Caco-2 (cell line): ENCODE measurements at regions of chr10 and their contacts with region 1.

Region 1: GRCh38 chr10:103612462-103613365 is 119.2 kb downstream of the NEURL1 start:
- DNase-seq: no peak
- H3K4me3 ChIP-seq: no peak overlapping the region
- H3K4me3 Mint-ChIP-seq: no peak overlapping the region
- H3K27ac Mint-ChIP-seq: no peak overlapping the region
- H3K4me1 ChIP-seq: no peaks in the 10 kb centered on the region
- H3K4me1 Mint-ChIP-seq: no peaks in the 10 kb centered on the region
- H3K27me3 ChIP-seq: no peaks in the 10 kb centered on the region
- H3K27me3 Mint-ChIP-seq: no peaks in the 10 kb centered on the region
- CTCF ChIP-seq: no peak

Region 2: DNA sequence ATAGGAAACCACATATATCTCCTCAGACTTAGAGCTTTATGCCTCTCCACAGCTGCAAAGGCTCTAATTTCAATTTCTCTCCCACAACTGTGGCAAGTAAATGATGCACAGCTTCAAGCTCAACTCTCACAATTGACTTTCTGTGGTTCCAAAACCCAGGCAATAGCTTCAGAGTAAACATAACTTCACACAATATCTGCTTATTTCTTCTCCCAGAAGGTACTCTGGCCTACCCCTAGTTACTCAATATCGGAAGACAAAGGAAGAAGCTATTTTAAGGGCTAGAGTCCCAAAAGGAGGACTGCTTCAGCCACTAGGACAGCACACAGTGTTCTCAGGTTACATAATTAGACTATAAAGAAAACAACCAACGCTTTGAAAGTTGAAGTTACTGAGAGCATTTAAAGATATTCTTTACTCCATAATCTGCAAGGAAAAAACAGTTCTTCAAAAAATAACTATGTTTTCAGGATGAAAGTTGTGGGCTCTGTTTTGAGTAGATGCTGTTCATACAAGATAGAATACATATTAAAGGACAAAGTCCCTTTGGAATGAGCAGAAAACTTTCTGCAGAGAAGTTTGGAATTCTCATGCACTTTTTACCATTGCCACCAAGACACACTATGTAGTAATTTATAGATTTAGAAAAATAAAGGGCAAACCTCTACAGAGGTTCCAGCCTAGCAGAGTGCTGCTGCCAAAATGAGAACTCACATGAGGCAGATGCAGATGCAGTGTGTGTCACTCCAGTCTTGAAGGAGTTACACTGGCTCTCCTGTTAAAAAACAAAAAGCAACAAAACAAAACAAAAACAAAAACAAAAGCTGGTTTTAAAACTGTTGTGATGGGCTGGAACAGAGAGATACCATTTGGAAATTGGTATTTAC is 501.4 kb before region 1 on chr10:
- CTCF ChIA-PET with region 1: no interaction called
- POLR2A ChIA-PET with region 1: no interaction called
- intact Hi-C with region 1: no loop called
- DNase-seq: no peak
- H3K4me3 ChIP-seq: no peak overlapping the region
- H3K4me3 Mint-ChIP-seq: no peak overlapping the region
- H3K27ac Mint-ChIP-seq: no peak overlapping the region
- H3K4me1 ChIP-seq: peaks cover 31% of the 10 kb centered on the region
- H3K4me1 Mint-ChIP-seq: peaks cover 15% of the 10 kb centered on the region
- H3K27me3 ChIP-seq: no peaks in the 10 kb centered on the region
- H3K27me3 Mint-ChIP-seq: no peaks in the 10 kb centered on the region
- CTCF ChIP-seq: no peak

Region 3: DNA sequence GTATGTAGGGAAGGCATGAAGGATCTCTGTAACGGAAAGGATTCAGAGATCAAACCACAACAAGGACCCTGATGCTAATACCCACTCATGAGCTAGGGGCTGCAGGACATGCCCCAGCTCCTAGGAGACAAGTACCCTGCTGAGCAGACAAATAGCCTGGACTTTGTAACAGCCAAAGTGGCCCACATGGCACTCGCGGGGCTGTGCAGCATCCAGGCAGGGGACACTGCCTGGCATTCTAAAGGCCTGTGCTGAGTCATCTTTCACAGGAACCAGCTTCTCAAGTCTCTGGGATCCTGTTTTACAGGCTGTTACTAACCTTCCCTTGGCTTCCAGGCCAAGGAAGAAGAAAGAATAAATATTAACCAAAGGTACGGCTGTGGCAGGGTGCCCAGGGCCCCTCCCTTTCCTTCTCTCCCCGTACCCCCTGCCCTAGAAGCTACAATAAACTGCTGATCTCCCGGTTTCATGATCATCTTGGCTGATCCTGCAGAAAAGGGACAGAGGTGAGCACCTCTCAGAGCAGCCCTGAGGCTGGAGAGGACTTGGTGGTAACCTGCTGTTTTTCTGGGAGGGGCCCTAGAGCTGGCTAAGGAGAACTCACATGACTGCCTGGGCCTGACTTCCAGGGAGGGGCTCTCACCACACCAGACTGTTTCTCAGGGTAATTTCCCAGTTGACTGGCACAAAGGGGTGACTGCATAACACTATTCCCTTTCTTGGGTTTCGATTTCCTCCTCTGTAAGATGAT is 371.3 kb before region 1 on chr10:
- CTCF ChIA-PET with region 1: no interaction called
- POLR2A ChIA-PET with region 1: no interaction called
- intact Hi-C with region 1: no loop called
- DNase-seq: peak; percentile 80 to 84
- H3K4me3 ChIP-seq: no peak overlapping the region
- H3K4me3 Mint-ChIP-seq: peak overlapping the region; percentile 67
- H3K27ac Mint-ChIP-seq: peak overlapping the region; percentile 88
- H3K4me1 ChIP-seq: peaks cover 46% of the 10 kb centered on the region
- H3K4me1 Mint-ChIP-seq: peaks cover 44% of the 10 kb centered on the region
- H3K27me3 ChIP-seq: no peaks in the 10 kb centered on the region
- H3K27me3 Mint-ChIP-seq: no peaks in the 10 kb centered on the region
- CTCF ChIP-seq: no peak

Region 4: DNA sequence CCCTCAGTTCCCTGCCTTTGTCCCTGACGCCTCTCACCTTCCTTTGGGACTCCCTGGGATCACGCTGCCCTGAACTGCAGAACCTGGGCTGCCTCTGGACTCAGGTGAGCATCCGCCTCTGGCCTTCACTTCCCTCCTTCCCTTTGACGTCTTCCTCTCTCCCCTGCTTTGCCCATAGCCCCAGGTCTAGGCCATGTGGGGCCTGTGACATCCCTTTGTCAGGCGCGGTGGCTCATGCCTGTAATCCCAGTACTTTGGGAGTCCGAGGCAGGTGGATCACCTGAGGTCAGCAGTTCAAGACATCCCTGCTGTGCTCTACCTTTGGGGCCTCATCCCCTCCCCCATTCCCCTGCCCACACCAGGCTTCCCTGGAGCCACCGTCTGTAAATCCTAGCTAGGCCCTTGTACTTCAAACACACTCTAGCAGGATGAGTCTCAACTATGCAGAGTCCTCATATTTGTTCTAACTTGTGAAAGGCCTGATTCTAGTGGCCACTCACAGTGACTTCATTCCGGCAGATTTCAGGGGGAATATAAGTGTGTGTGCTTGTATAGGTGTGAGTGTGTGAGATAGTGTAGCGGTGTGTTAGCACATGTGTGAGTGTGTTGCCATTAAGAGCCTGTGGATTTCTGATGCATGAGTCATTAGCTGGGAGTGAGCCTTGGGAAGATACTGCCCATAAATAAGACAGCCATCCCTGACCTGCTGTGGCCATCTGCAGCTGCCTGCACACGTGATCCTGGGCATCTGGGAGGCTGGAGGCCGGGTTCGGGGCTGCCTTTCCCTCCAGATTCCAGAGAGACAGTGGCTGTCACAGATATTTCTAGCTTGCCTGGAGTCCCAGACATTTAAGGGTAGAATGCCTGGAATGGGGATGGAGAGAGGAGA is 121.0 kb before region 1 on chr10:
- CTCF ChIA-PET with region 1: no interaction called
- POLR2A ChIA-PET with region 1: no interaction called
- intact Hi-C with region 1: no loop called
- DNase-seq: peak; percentile 45 to 69
- H3K4me3 ChIP-seq: no peak overlapping the region
- H3K4me3 Mint-ChIP-seq: peak overlapping the region; percentile 2
- H3K27ac Mint-ChIP-seq: no peak overlapping the region
- H3K4me1 ChIP-seq: peaks cover 23% of the 10 kb centered on the region
- H3K4me1 Mint-ChIP-seq: peaks cover 14% of the 10 kb centered on the region
- H3K27me3 ChIP-seq: peaks cover 3% of the 10 kb centered on the region; the same call in 1 of the 2 replicates
- H3K27me3 Mint-ChIP-seq: peaks cover 3% of the 10 kb centered on the region
- CTCF ChIP-seq: no peak

Region 5: DNA sequence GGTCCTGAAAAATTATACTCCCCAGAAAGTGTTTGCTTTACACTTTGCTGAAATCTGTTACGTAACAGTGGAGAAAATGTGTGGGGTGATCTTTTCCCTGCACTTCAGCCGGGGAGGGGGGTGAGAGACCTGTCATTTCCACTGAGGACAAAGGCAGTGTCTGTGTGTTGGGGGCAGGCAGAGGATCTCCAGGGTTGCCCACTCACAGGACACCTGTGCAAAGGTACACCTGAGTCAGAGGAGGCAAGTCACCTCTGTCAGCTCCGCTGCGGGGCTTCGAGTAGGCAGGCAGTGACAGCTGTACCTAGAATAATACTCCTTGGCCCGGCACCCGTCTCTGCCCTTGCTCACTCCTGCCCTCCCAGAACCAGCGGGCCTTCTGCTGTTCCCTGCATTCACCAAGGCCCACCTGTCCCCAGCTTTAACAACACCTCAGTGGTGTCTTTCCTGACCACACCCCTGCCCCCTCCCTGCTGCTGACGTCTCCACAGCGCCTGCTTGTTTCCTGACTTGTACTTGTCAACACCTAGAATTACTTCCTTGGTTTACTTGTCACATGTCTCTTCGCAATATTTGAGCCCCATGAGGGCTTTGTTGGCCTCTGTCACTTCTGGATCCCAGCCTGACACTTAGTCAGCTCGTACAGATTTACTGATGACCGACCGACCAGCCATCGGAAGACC is 40.0 kb after region 1 on chr10:
- CTCF ChIA-PET with region 1: no interaction called
- POLR2A ChIA-PET with region 1: no interaction called
- intact Hi-C with region 1: loop called (anchors 5 kb)
- DNase-seq: no peak
- H3K4me3 ChIP-seq: no peak overlapping the region
- H3K4me3 Mint-ChIP-seq: no peak overlapping the region
- H3K27ac Mint-ChIP-seq: peak overlapping the region; percentile 72
- H3K4me1 ChIP-seq: peaks cover 31% of the 10 kb centered on the region
- H3K4me1 Mint-ChIP-seq: peaks cover 14% of the 10 kb centered on the region
- H3K27me3 ChIP-seq: no peaks in the 10 kb centered on the region
- H3K27me3 Mint-ChIP-seq: no peaks in the 10 kb centered on the region
- CTCF ChIP-seq: no peak